Activated CD4-positive, alpha-beta memory T cell treated with anti-CD3 and anti-CD28 coated beads for 36 hours (primary cell): ENCODE measurements at regions of chr3 and their contacts with region 1.

Region 1: DNA sequence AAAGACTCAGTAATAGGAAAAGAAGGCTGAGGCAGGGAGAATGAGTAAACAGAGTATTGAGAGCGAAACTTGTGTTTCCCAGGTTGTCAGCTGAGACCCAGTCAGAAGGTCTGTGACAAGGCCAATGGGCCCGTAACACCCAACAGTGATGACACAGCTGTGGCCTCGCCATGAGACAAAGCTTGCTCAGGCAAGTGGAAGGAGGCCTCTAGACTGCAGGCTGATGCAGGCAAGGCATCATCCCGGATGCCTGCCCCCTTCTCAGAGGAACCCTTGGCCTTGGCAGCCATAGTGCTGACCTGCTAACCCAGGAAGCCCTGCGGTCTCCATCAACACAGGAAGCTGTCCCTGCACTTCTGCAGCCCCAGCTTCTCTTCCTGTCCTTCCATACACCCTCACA is 15.4 kb downstream of the RAB6B start:
- DNase-seq: peak; percentile 67
- H3K4me3 Mint-ChIP-seq: no peak overlapping the region
- H3K27ac Mint-ChIP-seq: no peak overlapping the region
- H3K4me1 Mint-ChIP-seq: peaks cover 26% of the 10 kb centered on the region
- H3K27me3 Mint-ChIP-seq: peaks cover 4% of the 10 kb centered on the region

Region 2: DNA sequence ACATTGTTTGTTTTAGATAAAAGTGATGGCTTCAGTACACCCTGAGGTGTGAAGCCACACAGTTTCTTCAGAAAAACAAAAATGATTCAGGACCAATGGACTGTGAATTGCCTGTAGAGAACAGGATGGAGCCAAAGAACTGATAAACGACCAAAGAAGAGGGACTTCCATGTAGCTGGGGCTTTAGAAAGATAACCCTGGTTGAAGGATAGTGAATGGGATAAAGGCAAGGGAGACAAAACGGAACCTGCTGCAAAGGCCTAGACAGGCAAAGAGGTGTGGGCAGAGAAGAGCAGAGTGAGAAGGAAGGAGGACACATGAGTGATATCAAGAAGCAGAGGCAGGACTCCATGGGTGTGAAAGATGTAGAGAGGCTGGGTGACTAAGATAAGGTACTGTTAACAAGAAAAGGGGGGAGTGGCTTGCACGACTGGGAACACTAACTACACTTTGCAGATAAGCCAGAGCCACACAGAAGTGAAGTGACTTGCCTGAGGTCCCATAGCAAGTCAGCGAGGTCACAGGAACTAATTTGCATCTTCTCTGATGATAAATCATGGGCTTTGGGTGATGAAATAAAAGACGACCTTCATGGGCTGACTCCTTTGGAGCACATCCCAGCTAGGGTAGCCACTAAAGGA is 28.9 kb before region 1 on chr3:
- CTCF ChIA-PET with region 1: no interaction called
- POLR2A ChIA-PET with region 1: no interaction called
- intact Hi-C with region 1: loop called (anchors 1 kb)
- DNase-seq: peak; percentile 59
- H3K4me3 Mint-ChIP-seq: no peak overlapping the region
- H3K27ac Mint-ChIP-seq: peak overlapping the region; percentile 2
- H3K4me1 Mint-ChIP-seq: peaks cover 5% of the 10 kb centered on the region
- H3K27me3 Mint-ChIP-seq: no peaks in the 10 kb centered on the region

Region 3: DNA sequence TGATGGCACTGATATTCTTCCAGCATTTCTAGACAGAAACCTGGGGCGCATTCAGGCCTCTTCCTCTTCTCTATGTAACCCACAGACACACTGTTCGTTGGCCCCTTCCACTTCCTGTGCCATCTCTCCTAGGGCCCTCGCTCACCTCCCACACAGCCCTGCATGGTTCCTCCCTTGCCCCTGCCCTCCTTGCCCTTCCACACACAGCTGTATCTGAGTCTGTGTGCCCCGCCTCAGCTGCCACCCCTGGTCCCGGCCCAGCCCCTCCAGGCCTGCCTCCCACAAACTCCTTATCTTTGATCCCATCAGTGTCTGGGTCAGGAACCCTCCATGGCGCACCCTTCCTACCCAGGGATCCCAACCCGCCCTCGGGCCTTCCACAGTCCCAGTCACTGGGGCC is 22.5 kb before region 1 on chr3:
- CTCF ChIA-PET with region 1: no interaction called
- POLR2A ChIA-PET with region 1: no interaction called
- intact Hi-C with region 1: loop called (anchors 1 kb)
- DNase-seq: peak; percentile 20
- H3K4me3 Mint-ChIP-seq: no peak overlapping the region
- H3K27ac Mint-ChIP-seq: no peak overlapping the region
- H3K4me1 Mint-ChIP-seq: peaks cover 6% of the 10 kb centered on the region
- H3K27me3 Mint-ChIP-seq: no peaks in the 10 kb centered on the region

Region 4: GRCh38 chr3:134485718-134486576 is 605.7 kb after region 1 on chr3 and contains the starts of genes ANAPC13 and CEP63:
- CTCF ChIA-PET with region 1: no interaction called
- POLR2A ChIA-PET with region 1: no interaction called
- intact Hi-C with region 1: no loop called
- DNase-seq: peak; percentile 95
- H3K4me3 Mint-ChIP-seq: peak within 1 kb of the TSS; percentile 87
- H3K27ac Mint-ChIP-seq: peak within 1 kb of the TSS; percentile 97
- H3K4me1 Mint-ChIP-seq: peaks cover 46% of the 10 kb centered on the region
- H3K27me3 Mint-ChIP-seq: no peaks in the 10 kb centered on the region
- total RNA-seq, gene ANAPC13: 30.1 to 33.1 TPM
- total RNA-seq, gene CEP63: 22.4 to 23.7 TPM